CD8-positive, alpha-beta memory T cell (primary cell): ENCODE measurements at regions of chr3 and their contacts with region 1.

Region 1: GRCh38 chr3:9843715-9844438 is at the start of gene RPUSD3:
- DNase-seq: peak; percentile 92 to 97 (median 96)
- H3K4me3 ChIP-seq: peak within 1 kb of the TSS; percentile 92
- H3K4me3 Mint-ChIP-seq: peak within 1 kb of the TSS; percentile 95 to 99 (median 98)
- H3K27ac ChIP-seq: peak within 1 kb of the TSS; percentile 79
- H3K27ac Mint-ChIP-seq: peak within 1 kb of the TSS; percentile 81 to 97 (median 92)
- H3K4me1 ChIP-seq: peaks cover 19% of the 10 kb centered on the region
- H3K4me1 Mint-ChIP-seq: peaks cover 17 to 32% (median 29%) of the 10 kb centered on the region in 3 donors
- H3K27me3 ChIP-seq: no peaks in the 10 kb centered on the region
- H3K27me3 Mint-ChIP-seq: peaks cover 0 to 2% of the 10 kb centered on the region in 2 donors
- total RNA-seq, gene RPUSD3: 74.3 to 77.6 TPM

Region 2: GRCh38 chr3:9830311-9830710 is 13.6 kb before region 1 on chr3:
- CTCF ChIA-PET with region 1: interaction called, 15 read pairs
- POLR2A ChIA-PET with region 1: interaction called, 3 read pairs
- DNase-seq: no peak
- H3K4me3 ChIP-seq: no peak overlapping the region
- H3K4me3 Mint-ChIP-seq: no peak overlapping the region
- H3K27ac ChIP-seq: no peak overlapping the region
- H3K27ac Mint-ChIP-seq: peak overlapping the region in 2 of 8 donors; percentile 15 to 64
- H3K4me1 ChIP-seq: no peaks in the 10 kb centered on the region
- H3K4me1 Mint-ChIP-seq: peaks cover 0 to 7% (median 1%) of the 10 kb centered on the region in 3 donors
- H3K27me3 ChIP-seq: no peaks in the 10 kb centered on the region
- H3K27me3 Mint-ChIP-seq: no peaks in the 10 kb centered on the region

Region 3: GRCh38 chr3:9951962-9952805 is 108.3 kb after region 1 on chr3 and contains the start of gene PRRT3:
- CTCF ChIA-PET with region 1: no interaction called
- POLR2A ChIA-PET with region 1: no interaction called
- DNase-seq: peak; percentile 23 to 69 (median 42)
- H3K4me3 ChIP-seq: peak within 1 kb of the TSS; percentile 69
- H3K4me3 Mint-ChIP-seq: peak within 1 kb of the TSS; percentile 83 to 94 (median 86)
- H3K27ac ChIP-seq: no peak within 1 kb of the TSS
- H3K27ac Mint-ChIP-seq: peak within 1 kb of the TSS in 7 of 8 donors; percentile 43 to 92 (median 82)
- H3K4me1 ChIP-seq: peaks cover 11% of the 10 kb centered on the region
- H3K4me1 Mint-ChIP-seq: peaks cover 9 to 21% (median 11%) of the 10 kb centered on the region in 3 donors
- H3K27me3 ChIP-seq: no peaks in the 10 kb centered on the region
- H3K27me3 Mint-ChIP-seq: no peaks in the 10 kb centered on the region
- total RNA-seq, gene PRRT3: 12.1 to 12.3 TPM